Right lobe of liver (tissue), 6 donors: ENCODE measurements at regions of chr2 and their contacts with region 1.

Region 1: DNA sequence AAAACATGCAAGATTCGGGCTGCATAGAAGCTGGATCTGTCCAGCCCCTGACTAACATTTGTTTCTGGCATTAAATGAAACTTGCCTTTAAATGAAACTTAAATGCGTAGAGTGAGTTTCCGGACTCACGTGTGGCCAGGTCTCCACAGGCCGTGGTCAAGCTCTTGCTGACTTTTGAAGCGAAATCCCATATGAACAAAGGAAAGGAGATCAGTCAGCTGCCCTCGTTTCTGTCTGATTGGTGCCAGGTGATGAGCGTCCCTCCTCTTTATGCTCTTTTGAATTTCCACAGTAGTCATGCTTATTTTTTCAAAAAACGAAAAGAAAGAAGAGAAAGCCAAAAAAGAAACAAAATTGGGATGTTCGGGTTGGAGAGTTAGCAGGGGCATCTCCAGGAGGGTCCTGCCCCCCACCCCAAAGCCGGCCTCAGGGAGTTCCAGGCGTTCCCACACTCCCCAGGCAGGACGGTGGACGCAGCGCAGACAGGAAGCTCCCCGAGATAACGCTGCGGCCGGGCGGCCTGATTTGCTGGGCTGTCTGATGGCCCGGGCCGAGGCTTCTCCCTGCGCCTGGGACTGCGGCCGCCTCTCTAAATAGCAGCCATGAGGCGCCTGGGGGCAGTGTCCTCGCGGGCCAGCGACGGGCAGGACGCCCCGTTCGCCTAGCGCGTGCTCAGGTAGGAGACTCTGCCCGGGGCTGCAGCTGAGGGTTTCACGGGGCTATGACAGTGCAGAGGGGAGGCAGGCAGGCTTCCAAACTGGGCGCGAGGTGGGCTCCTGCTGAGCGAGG is at the start of gene COLEC11:
- DNase-seq: peak; percentile 67 to 78 (median 78)
- ATAC-seq: peak; percentile 96 to 97 (median 97)
- H3K4me3 ChIP-seq: peak within 1 kb of the TSS; percentile 16 to 38 (median 31)
- H3K27ac ChIP-seq: peak within 1 kb of the TSS; percentile 19 to 72 (median 49)
- H3K4me1 ChIP-seq: peaks cover 0 to 4% (median 0%) of the 10 kb centered on the region in 4 donors
- H3K27me3 ChIP-seq: no peaks in the 10 kb centered on the region
- CTCF ChIP-seq: peak; percentile 16 to 47 (median 32)
- POLR2A ChIP-seq: peak; percentile 42
- total RNA-seq, gene COLEC11: 25.2 to 58.6 (median 41.1) TPM

Region 2: DNA sequence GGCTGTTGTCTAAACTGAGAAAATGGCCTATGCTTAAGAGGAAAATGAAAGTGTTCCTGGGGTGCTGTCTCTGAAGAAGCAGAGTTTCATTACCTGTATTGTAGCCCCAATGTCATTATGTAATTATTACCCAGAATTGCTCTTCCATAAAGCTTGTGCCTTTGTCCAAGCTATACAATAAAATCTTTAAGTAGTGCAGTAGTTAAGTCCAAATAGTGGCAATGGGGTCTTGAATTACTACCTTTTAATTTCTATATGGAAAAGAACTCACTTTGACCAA is 49.5 kb after region 1 on chr2:
- intact Hi-C with region 1: loop called in 1 of 2 experiments (anchors 10 kb)
- DNase-seq: no peak
- ATAC-seq: no peak
- H3K4me3 ChIP-seq: no peak overlapping the region
- H3K27ac ChIP-seq: no peak overlapping the region
- H3K4me1 ChIP-seq: no peaks in the 10 kb centered on the region
- H3K27me3 ChIP-seq: no peaks in the 10 kb centered on the region
- CTCF ChIP-seq: no peak
- POLR2A ChIP-seq: no peak